Dendritic cell treated with granulocyte-macrophage colony-stimulating factor and Interleukin-4, amounts not matched to agents 40 ng/mL and 50 ng/mL, for 4 days (primary cell): ENCODE measurements at regions of chr9 and their contacts with region 1.

Region 1: GRCh38 chr9:104927912-104928740 is at the start of gene ABCA1:
- H3K4me3 Mint-ChIP-seq: peak within 1 kb of the TSS; percentile 99
- H3K27ac Mint-ChIP-seq: peak within 1 kb of the TSS; percentile 98
- H3K4me1 Mint-ChIP-seq: peaks cover 27% of the 10 kb centered on the region
- H3K27me3 Mint-ChIP-seq: peaks cover 7% of the 10 kb centered on the region

Region 2: DNA sequence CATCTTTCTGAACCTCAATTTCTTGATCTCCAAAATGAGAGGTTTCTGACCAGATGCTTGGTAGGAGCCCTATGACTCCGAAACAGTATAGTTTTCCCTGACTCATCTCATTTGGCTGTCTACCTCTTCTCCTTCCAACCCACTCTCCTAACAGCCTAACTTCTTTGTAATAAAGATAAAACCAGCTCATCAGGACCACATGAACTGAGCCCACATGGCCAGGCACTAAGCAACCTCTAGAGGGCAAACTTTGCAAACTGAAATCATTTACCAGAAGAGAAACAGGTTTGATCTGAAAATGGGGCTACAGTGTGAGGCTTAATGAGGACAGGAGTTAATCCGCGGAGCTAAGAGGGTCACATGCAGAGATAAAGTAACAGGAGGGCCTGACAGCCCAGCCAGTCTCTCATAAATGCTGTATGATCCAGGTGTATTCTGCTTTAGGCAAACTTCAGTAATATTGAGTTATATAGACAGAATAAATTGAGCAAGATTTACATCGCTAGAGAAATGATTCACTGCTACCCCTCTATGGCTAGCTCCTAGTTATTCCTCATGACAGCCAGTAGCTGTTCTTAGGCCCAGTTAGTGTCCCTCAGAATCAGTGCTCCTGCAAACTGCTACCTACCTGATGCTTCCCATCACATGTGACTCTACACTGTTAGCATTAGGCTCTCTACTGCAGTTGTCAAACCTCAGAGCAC is 64.8 kb before region 1 on chr9:
- intact Hi-C with region 1: loop called (anchors 5 kb)
- H3K4me3 Mint-ChIP-seq: no peak overlapping the region
- H3K27ac Mint-ChIP-seq: no peak overlapping the region
- H3K4me1 Mint-ChIP-seq: peaks cover 83% of the 10 kb centered on the region
- H3K27me3 Mint-ChIP-seq: no peaks in the 10 kb centered on the region

Region 3: DNA sequence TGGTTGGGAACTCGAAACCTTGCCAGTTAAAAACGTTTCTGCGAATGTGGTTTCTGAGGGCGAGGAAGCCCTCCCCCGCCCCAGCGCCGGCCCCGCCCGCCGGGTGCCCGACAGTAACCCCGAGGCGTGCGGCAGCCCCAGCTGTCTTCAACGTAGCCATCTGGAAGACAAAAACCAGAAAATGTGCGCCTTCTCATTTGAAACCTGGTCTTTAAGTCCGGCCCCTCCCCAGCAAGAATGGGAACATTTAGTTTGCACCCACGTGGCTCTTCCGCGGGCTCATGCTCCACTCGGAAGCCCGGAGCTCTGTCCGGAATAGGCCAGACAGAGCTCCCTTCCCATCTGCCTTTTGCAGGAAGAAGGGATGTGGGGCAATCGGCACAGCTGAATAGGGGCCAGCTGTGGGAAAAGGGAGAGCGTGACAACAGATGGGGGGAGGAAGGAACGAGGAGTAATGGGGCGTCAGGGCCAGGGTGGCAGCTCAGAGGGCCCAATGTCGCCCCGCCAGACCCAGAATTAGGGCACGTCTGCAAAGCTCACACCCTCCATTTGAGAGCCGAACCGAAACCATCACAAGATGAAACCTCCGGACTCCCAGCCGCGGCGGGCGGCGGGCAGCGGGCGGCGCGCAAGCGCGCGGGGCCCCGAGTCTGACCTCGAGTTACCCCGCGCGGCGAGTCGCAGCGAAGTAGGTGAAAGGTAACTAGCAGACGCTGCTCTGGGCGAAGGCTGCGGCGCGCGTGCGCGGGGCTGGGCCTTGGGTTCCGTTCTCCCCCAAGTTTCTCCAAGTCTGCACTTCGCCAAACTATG is 63.2 kb after region 1 on chr9:
- intact Hi-C with region 1: loop called (anchors 2 kb)
- H3K4me3 Mint-ChIP-seq: peak overlapping the region; percentile 74
- H3K27ac Mint-ChIP-seq: peak overlapping the region; percentile 87
- H3K4me1 Mint-ChIP-seq: peaks cover 45% of the 10 kb centered on the region
- H3K27me3 Mint-ChIP-seq: peaks cover 16% of the 10 kb centered on the region

Region 4: GRCh38 chr9:105064315-105065097 is 136.4 kb after region 1 on chr9:
- intact Hi-C with region 1: loop called (anchors 5 kb)
- H3K4me3 Mint-ChIP-seq: peak overlapping the region; percentile 54
- H3K27ac Mint-ChIP-seq: peak overlapping the region; percentile 92
- H3K4me1 Mint-ChIP-seq: peaks cover 67% of the 10 kb centered on the region
- H3K27me3 Mint-ChIP-seq: peaks cover 4% of the 10 kb centered on the region

Region 5: DNA sequence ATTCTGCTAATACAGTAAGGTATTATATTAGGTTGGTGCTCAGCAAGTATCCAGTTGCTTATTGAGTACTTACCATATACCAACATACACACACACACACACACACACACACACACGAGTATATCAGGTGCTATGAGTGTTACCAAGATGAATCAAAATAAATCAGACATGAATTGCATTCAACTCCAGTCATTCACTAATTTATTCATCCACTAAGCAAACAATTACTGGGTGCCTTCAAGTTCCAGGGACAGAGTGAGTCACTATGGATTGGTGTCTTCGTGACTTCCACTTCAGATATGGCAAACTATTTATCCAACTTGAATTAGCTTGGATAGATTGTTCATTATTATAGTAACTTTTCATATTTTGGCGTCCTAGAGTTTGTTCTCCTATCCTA is 175.7 kb after region 1 on chr9:
- intact Hi-C with region 1: no loop called
- H3K4me3 Mint-ChIP-seq: no peak overlapping the region
- H3K27ac Mint-ChIP-seq: no peak overlapping the region
- H3K4me1 Mint-ChIP-seq: peaks cover 5% of the 10 kb centered on the region
- H3K27me3 Mint-ChIP-seq: no peaks in the 10 kb centered on the region

Region 6: DNA sequence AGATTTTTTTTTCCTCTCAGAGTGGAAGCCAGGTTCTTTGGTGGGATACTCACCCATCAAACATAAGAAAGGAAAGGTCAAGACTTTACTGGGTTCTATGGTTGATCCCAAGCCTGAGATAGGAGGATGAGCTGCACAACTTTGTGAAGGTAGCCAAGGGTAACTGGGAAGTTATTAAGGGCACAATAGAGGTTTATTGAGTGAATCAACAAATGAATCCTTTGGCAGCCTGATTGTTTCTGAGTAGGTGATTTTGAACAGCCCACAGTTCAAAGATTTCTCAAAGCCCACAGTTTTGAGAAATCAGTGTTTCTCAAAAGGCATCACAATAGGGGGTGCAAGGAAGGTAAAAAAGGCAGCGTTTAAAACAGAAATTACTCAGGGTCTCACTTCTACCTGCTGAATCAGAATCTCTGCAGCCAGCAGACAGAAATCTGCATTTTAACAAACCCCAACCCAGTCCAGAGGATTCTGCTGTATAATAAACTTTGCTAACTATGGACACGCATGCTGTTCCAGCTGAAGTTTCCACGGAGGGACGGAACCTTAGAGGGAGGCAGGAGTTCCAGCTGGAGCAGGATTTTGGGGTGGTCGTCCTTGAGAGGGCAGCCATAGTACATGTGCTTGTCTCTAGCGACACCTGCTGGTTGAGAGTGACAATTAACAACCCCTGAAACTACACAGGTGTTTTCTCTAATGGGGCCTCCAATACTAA is 487.0 kb after region 1 on chr9:
- intact Hi-C with region 1: loop called (anchors 5 kb)
- H3K4me3 Mint-ChIP-seq: no peak overlapping the region
- H3K27ac Mint-ChIP-seq: no peak overlapping the region
- H3K4me1 Mint-ChIP-seq: peaks cover 6% of the 10 kb centered on the region
- H3K27me3 Mint-ChIP-seq: no peaks in the 10 kb centered on the region